Activated CD4-positive, alpha-beta memory T cell treated with anti-CD3 and anti-CD28 coated beads, Interleukin-2, amount 10 ng/mL, durations not matched to agents 7 days and 5 days (primary cell): ENCODE measurements at regions of chr22 and their contacts with region 1.

Region 1: GRCh38 chr22:39917776-39918495 is 17.1 kb downstream of the GRAP2 start:
- DNase-seq: no peak
- H3K4me3 Mint-ChIP-seq: peak overlapping the region; percentile 68
- H3K27ac Mint-ChIP-seq: peak overlapping the region; percentile 85
- H3K4me1 Mint-ChIP-seq: peaks cover 90% of the 10 kb centered on the region
- H3K27me3 Mint-ChIP-seq: no peaks in the 10 kb centered on the region

Region 2: DNA sequence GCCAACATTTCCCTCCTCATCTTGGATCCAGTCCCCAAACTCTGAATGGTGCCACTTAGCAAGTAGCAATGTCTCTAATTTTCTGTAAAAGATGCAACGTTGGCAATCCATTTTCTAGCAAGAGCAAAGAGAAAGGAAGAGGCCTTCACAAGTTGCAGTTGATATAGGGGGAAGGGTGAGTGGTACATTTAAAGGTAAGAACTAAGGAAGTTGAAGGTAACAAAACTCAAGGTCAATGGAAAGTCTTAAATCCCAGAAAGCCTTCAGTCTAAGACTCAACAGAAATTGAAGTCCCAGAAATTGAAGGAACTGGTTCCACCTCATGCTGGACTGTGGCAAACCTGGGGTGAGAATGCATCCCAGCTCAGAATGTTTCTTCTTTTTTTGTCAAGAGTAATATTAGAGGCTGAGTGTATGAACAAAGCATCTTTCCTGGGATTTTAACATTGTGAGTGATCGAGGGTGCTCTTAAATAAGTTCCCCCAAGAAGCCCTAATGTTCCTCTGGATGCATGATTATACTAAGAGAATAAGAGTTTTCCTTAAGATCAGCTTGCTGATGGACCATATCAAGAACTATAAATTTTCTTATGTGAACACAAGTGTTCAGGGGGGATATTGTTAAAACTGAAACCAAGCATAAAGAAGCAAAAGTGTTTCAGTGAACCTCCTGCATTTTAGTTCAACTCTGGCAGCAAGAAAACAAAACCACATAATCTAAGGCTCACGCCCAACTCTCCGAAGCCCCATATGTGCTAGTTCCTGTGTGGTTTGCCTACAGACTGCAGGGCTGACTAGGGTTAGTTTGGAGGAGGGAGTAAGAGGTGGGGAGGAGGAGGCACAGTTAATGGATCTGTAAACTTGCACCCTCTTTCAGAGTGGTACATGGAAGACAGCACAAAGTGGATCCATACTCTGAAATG is 17.4 kb before region 1 on chr22 and contains the start of gene GRAP2:
- CTCF ChIA-PET with region 1: interaction called, 13 read pairs
- POLR2A ChIA-PET with region 1: interaction called, 447 read pairs
- DNase-seq: peak; percentile 86
- H3K4me3 Mint-ChIP-seq: peak within 1 kb of the TSS; percentile 87
- H3K27ac Mint-ChIP-seq: peak within 1 kb of the TSS; percentile 85
- H3K4me1 Mint-ChIP-seq: peaks cover 17% of the 10 kb centered on the region
- H3K27me3 Mint-ChIP-seq: no peaks in the 10 kb centered on the region
- total RNA-seq, gene GRAP2: 108 to 111 TPM